ENCODE measurements at regions of chr6 and their contacts with region 1.

Region 1: GRCh38 chr6:139753198-139753861 is 378.9 kb upstream of the CITED2 start:
- DNase-seq: no peak
- H3K4me3 ChIP-seq: no peak overlapping the region
- H3K27me3 ChIP-seq: no peaks in the 10 kb centered on the region
- CTCF ChIP-seq: no peak

Region 2: GRCh38 chr6:139679516-139680179 is 73.7 kb before region 1 on chr6:
- CTCF ChIA-PET with region 1: no interaction called
- POLR2A ChIA-PET with region 1: no interaction called
- DNase-seq: peak; percentile 29
- H3K4me3 ChIP-seq: no peak overlapping the region
- H3K27me3 ChIP-seq: no peaks in the 10 kb centered on the region
- CTCF ChIP-seq: no peak

Region 3: GRCh38 chr6:139732451-139732850 is 20.9 kb before region 1 on chr6:
- CTCF ChIA-PET with region 1: no interaction called
- POLR2A ChIA-PET with region 1: no interaction called
- DNase-seq: no peak
- H3K4me3 ChIP-seq: no peak overlapping the region
- H3K27me3 ChIP-seq: no peaks in the 10 kb centered on the region
- CTCF ChIP-seq: no peak

Region 4: GRCh38 chr6:139982652-139983295 is 229.4 kb after region 1 on chr6:
- CTCF ChIA-PET with region 1: no interaction called
- POLR2A ChIA-PET with region 1: interaction called, 11 read pairs
- DNase-seq: peak; percentile 73
- H3K4me3 ChIP-seq: no peak overlapping the region
- H3K27me3 ChIP-seq: no peaks in the 10 kb centered on the region
- CTCF ChIP-seq: no peak

Region 5: GRCh38 chr6:140105857-140106256 is 352.5 kb after region 1 on chr6:
- CTCF ChIA-PET with region 1: no interaction called
- POLR2A ChIA-PET with region 1: no interaction called
- DNase-seq: no peak
- H3K4me3 ChIP-seq: no peak overlapping the region
- H3K27me3 ChIP-seq: no peaks in the 10 kb centered on the region
- CTCF ChIP-seq: 0 out of 2 replicates have a peak, but pooled peaks have one; percentile 3

Measured in BJ (cell line).